ENCODE measurements at regions of chr15 and their contacts with region 1.

Region 1: GRCh38 chr15:43824302-43825246 is at the start of gene MFAP1:
- DNase-seq: peak; percentile 91
- H3K4me3 Mint-ChIP-seq: peak within 1 kb of the TSS; percentile 97
- H3K27ac Mint-ChIP-seq: peak within 1 kb of the TSS; percentile 98
- H3K4me1 Mint-ChIP-seq: peaks cover 28% of the 10 kb centered on the region
- H3K27me3 Mint-ChIP-seq: no peaks in the 10 kb centered on the region
- total RNA-seq, gene MFAP1: 43.7 and 44.3 TPM in 2 replicates

Region 2: DNA sequence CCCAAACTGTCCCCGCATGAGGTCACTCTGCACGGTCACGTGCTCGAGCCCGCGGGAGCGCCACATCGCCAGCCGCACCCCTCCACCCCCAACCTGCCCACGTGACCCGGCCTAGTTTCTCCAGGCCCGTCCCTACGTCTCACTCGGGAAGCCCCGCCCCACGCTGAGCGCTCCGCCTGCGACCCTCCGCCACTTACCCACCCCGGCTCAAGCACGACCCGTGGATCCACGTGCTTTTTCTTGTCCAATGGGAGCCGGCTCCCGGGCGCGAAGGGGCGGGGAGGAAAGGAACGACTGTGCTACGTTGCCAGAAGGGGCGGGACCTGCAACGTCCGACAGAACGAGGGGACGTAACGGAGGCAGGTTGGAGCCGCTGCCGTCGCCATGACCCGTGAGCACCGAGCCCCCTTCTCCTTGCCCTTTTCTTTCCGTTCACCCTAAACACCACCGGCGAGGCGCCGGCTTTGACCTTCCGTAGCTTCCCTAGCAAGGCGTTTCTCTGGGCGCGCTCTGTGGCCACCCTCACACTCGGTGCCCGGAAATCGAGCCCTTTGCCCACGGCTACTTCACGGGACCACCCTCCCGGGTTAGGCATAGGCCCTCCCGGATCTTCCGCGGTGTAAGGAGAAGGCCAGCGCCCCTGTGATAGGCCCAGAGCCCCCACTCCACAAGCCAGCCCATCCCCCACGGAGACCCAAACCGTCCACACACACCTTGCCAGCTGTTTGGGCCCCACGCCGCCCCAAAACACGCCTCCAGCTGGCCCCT is 32.4 kb before region 1 on chr15 and contains the start of gene SERF2:
- intact Hi-C with region 1: loop called (anchors 1 kb)
- DNase-seq: peak; percentile 99
- H3K4me3 Mint-ChIP-seq: peak within 1 kb of the TSS; percentile 97
- H3K27ac Mint-ChIP-seq: peak within 1 kb of the TSS; percentile 97
- H3K4me1 Mint-ChIP-seq: peaks cover 25% of the 10 kb centered on the region
- H3K27me3 Mint-ChIP-seq: no peaks in the 10 kb centered on the region
- total RNA-seq, gene SERF2: 580 and 598 TPM in 2 replicates

Region 3: DNA sequence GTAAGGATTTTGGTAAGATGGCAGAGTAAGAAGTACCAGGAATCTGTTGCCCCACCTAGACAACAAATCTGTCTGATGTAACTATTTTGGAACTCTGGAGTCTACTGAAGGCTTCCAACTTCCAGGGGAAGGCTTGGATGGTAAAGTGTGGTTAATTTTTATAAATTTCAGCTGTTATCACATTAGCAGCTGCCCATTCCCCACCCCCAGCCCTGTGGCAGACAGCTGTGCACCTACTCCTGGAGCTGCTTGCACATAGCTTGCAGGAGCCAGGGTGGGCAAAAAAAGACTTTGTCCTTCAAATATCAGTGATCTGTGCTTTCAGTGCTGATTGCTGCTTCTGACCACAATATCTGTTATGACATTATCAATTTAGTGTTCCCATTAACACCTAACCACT is 323.1 kb after region 1 on chr15:
- intact Hi-C with region 1: no loop called
- DNase-seq: no peak
- H3K4me3 Mint-ChIP-seq: no peak overlapping the region
- H3K27ac Mint-ChIP-seq: no peak overlapping the region
- H3K4me1 Mint-ChIP-seq: no peaks in the 10 kb centered on the region
- H3K27me3 Mint-ChIP-seq: peaks cover 34% of the 10 kb centered on the region